Pancreas (tissue), 10 donors: ENCODE measurements at regions of chr12 and their contacts with region 1.

Region 1: DNA sequence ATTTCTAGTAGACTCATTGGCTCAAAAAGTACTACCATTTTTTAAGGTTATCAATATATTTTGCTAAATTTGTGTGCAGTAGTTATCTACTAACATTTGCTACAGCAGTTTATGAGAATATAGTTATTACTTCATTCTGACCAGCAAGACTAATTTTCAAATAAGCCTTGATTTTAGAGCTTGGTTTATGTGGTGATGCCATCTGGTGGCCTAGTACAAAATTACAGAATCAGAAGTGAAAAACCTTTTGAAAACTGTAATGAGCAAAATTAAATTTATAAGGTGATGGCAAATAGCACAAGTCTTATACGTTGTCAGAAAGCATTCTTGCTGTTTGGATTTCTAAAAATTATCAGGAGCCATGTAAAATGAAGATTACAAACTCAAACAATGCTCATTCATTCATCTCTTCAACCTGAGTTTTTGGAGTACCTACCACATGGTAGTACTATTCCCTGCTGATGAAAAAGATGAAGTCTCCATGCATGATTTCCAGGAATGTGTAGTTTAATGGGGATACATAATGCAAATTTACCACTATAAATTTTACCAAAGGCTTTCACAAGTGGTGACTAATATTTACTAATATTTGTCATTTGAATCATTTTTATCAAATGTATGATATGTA is 51.0 kb downstream of the MAGOHB start:
- DNase-seq: no peak
- ATAC-seq: peak in 3 of 4 donors; percentile 53 to 58 (median 54)
- H3K4me3 ChIP-seq: no peak overlapping the region
- H3K27ac ChIP-seq: no peak overlapping the region
- H3K4me1 ChIP-seq: no peaks in the 10 kb centered on the region
- H3K27me3 ChIP-seq: no peaks in the 10 kb centered on the region
- CTCF ChIP-seq: peak; percentile 31 to 54 (median 50)

Region 2: GRCh38 chr12:10235761-10236631 is 326.4 kb before region 1 on chr12:
- intact Hi-C with region 1: loop called in 2 of 3 experiments (anchors 5 to 10 kb)
- DNase-seq: peak in 1 of 6 donors; percentile 31
- ATAC-seq: peak; percentile 76 to 88 (median 86)
- H3K4me3 ChIP-seq: no peak overlapping the region
- H3K27ac ChIP-seq: no peak overlapping the region
- H3K4me1 ChIP-seq: no peaks in the 10 kb centered on the region
- H3K27me3 ChIP-seq: no peaks in the 10 kb centered on the region
- CTCF ChIP-seq: peak; percentile 63 to 85 (median 78)

Region 3: DNA sequence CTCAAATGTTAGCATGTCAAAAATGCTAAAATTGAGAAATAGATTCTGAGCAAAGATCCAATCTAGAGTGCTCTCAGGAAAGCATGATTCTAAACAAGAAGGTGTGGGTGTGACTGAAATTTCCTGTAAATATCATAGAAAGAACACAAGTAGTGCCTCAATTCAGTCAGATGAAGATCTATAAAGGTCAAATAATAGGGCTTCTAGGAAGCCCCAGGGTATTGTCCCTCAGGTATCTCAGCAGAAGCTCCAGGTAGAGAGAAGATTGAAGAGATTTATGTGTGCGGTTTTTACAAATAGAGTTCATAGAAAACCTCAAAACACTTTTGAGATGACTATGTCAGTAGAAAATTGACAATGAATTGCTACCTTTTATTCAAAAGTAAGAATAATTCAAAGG is 241.8 kb before region 1 on chr12:
- intact Hi-C with region 1: loop called in 1 of 3 experiments (anchors 10 kb)
- DNase-seq: no peak
- ATAC-seq: no peak
- H3K4me3 ChIP-seq: no peak overlapping the region
- H3K27ac ChIP-seq: no peak overlapping the region
- H3K4me1 ChIP-seq: no peaks in the 10 kb centered on the region
- H3K27me3 ChIP-seq: no peaks in the 10 kb centered on the region
- CTCF ChIP-seq: no peak

Region 4: GRCh38 chr12:10331642-10332239 is 230.7 kb before region 1 on chr12:
- intact Hi-C with region 1: loop called (anchors 5 to 10 kb)
- DNase-seq: no peak
- ATAC-seq: peak; percentile 61 to 88 (median 86)
- H3K4me3 ChIP-seq: no peak overlapping the region
- H3K27ac ChIP-seq: no peak overlapping the region
- H3K4me1 ChIP-seq: no peaks in the 10 kb centered on the region
- H3K27me3 ChIP-seq: peaks cover 0 to 3% (median 0%) of the 10 kb centered on the region in 4 donors
- CTCF ChIP-seq: peak in 3 of 4 donors; percentile 49 to 60 (median 50)

Region 5: DNA sequence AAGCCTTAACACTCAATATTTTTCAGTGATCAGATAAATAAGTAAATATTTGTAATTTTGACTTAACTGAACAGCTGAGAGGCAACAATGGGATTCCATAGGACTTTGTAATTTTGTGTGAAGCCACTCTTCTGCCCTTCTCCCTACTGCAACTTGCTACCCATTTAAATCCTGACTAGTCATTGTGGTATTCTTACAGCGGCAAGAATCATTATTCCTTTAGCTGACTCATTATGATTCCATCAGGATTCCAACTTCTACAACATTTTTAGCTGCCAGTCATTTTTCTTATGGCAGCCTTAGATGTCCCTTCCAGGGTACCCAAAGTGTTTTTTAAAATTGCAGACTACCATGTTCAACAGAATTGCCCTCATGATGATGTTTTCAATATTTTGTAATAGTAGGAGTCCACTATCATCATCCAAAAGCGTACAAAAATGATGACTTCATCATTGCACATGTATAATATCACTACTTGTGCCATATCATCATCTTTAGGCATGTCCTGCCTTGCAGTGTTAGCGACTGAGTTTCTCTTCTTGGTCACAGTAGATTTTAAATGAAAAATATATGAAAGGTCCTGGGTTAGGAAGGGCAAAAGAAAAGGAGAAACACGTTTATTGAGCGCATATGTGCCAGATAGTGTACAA is 56.0 kb after region 1 on chr12:
- intact Hi-C with region 1: no loop called
- DNase-seq: no peak
- ATAC-seq: no peak
- H3K4me3 ChIP-seq: no peak overlapping the region
- H3K27ac ChIP-seq: no peak overlapping the region
- H3K4me1 ChIP-seq: peaks cover 0 to 7% (median 0%) of the 10 kb centered on the region in 3 donors
- H3K27me3 ChIP-seq: no peaks in the 10 kb centered on the region
- CTCF ChIP-seq: no peak

Region 6: GRCh38 chr12:10690906-10691305 is 128.5 kb after region 1 on chr12:
- intact Hi-C with region 1: no loop called
- DNase-seq: no peak
- ATAC-seq: no peak
- H3K4me3 ChIP-seq: no peak overlapping the region
- H3K27ac ChIP-seq: no peak overlapping the region
- H3K4me1 ChIP-seq: no peaks in the 10 kb centered on the region
- H3K27me3 ChIP-seq: no peaks in the 10 kb centered on the region
- CTCF ChIP-seq: no peak